Activated T-helper 2 cell treated with anti-CD3 and anti-CD28 coated beads, Interferon-gamma antibody, Interleukin-2, Interleukin-4, amounts not matched to agents 10 μg/mL and 5 μg/mL and 100 μg/mL, durations not matched to agents 14 hours and 24 hours and 36 hours (primary cell): ENCODE measurements at regions of chr17 and their contacts with region 1.

Region 1: DNA sequence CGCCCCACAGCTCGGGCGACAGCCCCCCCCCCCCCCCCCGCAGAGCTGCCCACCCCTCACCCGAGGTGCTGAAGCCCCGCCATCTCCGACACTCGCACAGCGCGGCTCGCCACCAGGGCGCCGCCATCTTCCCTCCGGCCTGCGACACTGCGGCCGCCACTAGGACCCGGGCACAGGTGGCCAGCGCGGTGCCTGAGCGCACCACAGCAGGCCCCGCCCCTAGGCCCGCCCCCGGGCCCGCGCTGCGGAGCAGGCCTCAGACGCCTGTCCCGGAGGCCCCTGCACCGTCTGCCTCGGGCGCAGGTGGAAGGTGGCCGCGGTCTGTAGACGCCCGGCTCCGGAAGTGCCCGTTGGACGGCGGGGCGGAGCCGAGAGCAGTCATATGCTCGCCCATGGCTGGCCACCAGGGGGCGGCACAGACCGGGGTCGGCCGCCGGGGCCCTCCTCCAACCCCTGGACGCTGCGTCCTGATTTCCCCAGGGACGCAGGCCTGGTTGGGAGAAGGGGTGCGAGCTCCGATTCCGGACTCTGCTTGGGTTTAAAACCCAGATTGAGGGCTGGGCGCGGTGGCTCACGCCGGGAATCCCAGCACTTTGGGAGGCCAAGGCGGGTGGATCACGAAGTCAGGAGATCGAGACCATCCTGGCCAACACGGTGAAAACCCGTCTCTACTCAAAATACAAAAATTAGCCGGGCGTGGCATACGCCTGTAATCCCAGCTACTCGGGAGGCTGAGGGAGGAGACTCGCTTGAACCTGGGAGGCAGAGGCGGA is at the start of gene MRPL38:
- DNase-seq: peak; percentile 96
- H3K4me3 Mint-ChIP-seq: peak within 1 kb of the TSS; percentile 88
- H3K27ac Mint-ChIP-seq: peak within 1 kb of the TSS; percentile 89
- H3K4me1 Mint-ChIP-seq: peaks cover 5% of the 10 kb centered on the region
- H3K27me3 Mint-ChIP-seq: no peaks in the 10 kb centered on the region
- total RNA-seq, gene MRPL38: 127 and 139 TPM in 2 replicates

Region 2: DNA sequence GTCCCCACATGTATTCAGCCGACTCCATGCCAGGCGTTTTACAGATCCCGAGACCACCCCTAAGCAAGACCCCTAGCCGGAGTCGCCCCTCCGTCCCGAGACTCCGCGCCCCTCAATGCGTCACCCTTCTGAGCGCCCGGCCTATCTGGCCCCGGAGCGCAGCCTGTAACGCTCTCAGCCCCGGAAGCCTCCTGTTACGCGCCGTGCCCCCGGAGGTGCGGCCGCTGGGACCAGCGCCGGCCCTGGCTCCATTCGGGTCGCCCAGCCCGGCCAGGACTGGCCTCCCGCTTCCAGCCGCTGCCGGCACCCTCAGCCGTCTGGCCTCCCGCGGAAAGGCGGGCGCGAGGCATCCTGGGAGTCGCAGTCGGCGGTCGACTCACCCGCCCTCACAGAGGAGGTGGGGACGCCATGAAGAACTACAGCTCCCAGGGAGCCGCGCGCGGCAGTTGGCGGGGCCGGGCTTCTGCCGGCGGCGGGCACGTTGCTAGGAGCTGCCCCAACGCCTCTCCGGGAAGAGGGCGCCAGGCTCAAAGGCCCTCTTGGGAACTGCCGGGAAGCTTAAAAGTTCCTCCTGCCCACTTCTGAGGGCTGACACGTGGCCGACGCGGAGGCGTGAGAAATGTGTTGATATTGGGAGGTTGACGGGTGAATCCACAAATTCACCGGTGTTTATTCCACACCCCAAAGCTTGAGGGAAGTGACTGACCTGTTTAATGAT is 35.9 kb after region 1 on chr17 and contains the start of gene FBF1:
- intact Hi-C with region 1: loop called (anchors 1 kb)
- DNase-seq: peak; percentile 85
- H3K4me3 Mint-ChIP-seq: peak within 1 kb of the TSS; percentile 89
- H3K27ac Mint-ChIP-seq: peak within 1 kb of the TSS; percentile 67
- H3K4me1 Mint-ChIP-seq: peaks cover 12% of the 10 kb centered on the region
- H3K27me3 Mint-ChIP-seq: no peaks in the 10 kb centered on the region
- total RNA-seq, gene FBF1: 15.0 and 17.6 TPM in 2 replicates

Region 3: GRCh38 chr17:75978938-75979704 is 74.2 kb after region 1 on chr17 and contains the starts of genes ACOX1 and TEN1:
- intact Hi-C with region 1: loop called (anchors 2 kb)
- DNase-seq: peak; percentile 94
- H3K4me3 Mint-ChIP-seq: peak within 1 kb of the TSS; percentile 96
- H3K27ac Mint-ChIP-seq: peak within 1 kb of the TSS; percentile 100
- H3K4me1 Mint-ChIP-seq: peaks cover 22% of the 10 kb centered on the region
- H3K27me3 Mint-ChIP-seq: no peaks in the 10 kb centered on the region
- total RNA-seq, gene ACOX1: 29.4 and 30.6 TPM in 2 replicates
- total RNA-seq, gene TEN1: 11.4 and 13.4 TPM in 2 replicates

Region 4: DNA sequence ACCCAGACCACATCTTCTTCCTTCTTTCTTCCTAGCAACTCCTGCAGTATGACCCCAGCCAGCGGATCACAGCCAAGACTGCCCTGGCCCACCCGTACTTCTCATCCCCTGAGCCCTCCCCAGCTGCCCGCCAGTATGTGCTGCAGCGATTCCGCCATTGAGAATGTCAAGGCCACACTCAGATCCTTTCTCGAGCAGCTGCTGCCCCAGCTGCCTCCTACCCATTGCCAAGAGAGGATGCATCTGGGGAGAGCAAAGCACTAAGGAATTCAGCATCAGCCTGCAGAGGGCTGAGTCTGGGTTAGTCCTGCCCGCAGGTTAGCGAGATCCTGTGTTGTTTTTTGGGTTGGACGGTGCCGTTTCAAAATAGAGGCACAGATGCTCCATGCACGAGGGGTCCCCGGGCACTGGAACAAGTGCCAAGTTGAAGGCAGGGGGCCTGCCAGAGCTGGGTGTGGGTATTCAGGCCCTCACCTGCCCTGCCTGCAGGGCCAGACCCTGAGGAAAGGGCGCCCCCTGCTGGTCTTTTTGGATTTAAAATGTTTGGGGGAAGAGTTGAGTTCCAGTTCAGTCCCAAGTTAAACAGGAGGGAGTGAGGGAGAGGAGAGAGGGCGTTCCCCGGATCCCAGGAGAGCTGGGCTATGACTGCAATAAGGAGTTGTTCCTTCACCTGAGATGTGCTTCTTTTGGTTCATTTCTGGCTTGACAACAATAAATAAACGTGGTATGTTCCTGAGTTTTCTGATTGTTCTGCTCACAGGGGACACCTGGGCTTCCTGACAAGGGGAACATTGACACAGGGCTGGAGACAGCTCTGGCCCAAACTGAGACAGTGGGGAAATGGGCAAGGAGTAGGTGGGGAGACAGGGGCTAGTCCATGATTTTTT is 100.6 kb after region 1 on chr17:
- intact Hi-C with region 1: loop called (anchors 1 kb)
- DNase-seq: peak; percentile 73
- H3K4me3 Mint-ChIP-seq: no peak overlapping the region
- H3K27ac Mint-ChIP-seq: no peak overlapping the region
- H3K4me1 Mint-ChIP-seq: no peaks in the 10 kb centered on the region
- H3K27me3 Mint-ChIP-seq: no peaks in the 10 kb centered on the region

Region 5: DNA sequence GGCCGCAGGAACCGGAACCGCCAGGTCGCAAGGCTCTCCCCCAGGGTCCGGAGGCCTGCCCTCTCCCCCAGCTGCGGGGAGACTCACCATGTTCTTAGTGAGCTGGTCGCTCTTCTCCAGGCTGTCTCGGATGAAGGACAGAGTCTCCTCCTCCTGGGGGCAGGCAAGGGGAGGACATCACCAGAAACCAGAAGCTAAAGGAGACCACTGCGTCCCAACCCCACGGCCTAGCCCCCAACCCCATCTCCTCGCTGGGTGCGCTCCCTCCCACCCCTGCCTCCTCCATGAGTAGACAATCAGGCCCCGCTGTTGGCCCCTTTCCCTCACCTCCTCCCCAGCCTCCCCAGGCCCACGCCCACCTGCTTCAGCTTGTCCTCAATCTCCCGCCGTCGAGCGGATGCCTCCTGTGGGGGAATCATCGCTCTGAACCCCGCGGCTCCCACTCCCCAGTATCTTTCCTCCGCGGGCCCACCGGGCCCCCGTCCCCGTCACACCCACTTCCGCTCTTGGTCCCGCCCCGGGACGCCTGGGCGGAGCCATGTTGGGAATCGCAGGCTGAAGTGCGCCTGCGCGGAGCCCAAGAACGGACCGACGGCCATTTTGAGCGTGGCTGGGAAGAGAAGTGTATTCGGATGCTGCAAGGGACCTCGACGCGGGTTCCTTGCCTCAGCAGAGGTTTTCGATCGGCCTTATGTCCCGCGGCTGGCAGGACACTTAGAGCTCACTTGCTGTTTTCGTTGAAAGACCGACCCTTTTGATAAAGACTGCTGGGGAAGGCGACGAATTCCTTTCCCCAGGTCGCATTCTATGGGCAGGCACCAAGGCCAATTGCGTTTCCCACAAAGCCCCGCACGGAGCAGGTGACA is 198.6 kb after region 1 on chr17 and contains the start of gene EXOC7:
- intact Hi-C with region 1: loop called (anchors 10 kb)
- DNase-seq: peak; percentile 91
- H3K4me3 Mint-ChIP-seq: peak within 1 kb of the TSS; percentile 96
- H3K27ac Mint-ChIP-seq: peak within 1 kb of the TSS; percentile 93
- H3K4me1 Mint-ChIP-seq: peaks cover 10% of the 10 kb centered on the region
- H3K27me3 Mint-ChIP-seq: no peaks in the 10 kb centered on the region
- total RNA-seq, gene EXOC7: 103 and 110 TPM in 2 replicates